IMR-90 (cell line): ENCODE measurements at regions of chr10 and their contacts with region 1.

Region 1: GRCh38 chr10:98331885-98332284 is 63.9 kb upstream of the LOXL4 start:
- DNase-seq: no peak
- ATAC-seq: no peak
- H3K4me3 ChIP-seq: no peak overlapping the region
- H3K27ac ChIP-seq: no peak overlapping the region
- H3K4me1 ChIP-seq: peaks cover 4% of the 10 kb centered on the region
- H3K27me3 ChIP-seq: no peaks in the 10 kb centered on the region
- CTCF ChIP-seq: peak; percentile 14; the same call in 1 of the 2 replicates
- POLR2A ChIP-seq: no peak
- RAD21 ChIP-seq: no peak

Region 2: GRCh38 chr10:98378722-98379121 is 46.8 kb after region 1 on chr10:
- CTCF ChIA-PET with region 1: no interaction called
- POLR2A ChIA-PET with region 1: no interaction called
- dilution Hi-C with region 1: no loop called
- in situ Hi-C with region 1: no loop called
- intact Hi-C with region 1: loop called (anchors 2 kb)
- DNase-seq: peak; percentile 91
- ATAC-seq: peak; percentile 79
- H3K4me3 ChIP-seq: no peak overlapping the region
- H3K27ac ChIP-seq: no peak overlapping the region
- H3K4me1 ChIP-seq: peaks cover 47% of the 10 kb centered on the region
- H3K27me3 ChIP-seq: no peaks in the 10 kb centered on the region
- CTCF ChIP-seq: no peak
- POLR2A ChIP-seq: no peak
- RAD21 ChIP-seq: no peak